ENCODE measurements at regions of chr9 and their contacts with region 1.

Region 1: DNA sequence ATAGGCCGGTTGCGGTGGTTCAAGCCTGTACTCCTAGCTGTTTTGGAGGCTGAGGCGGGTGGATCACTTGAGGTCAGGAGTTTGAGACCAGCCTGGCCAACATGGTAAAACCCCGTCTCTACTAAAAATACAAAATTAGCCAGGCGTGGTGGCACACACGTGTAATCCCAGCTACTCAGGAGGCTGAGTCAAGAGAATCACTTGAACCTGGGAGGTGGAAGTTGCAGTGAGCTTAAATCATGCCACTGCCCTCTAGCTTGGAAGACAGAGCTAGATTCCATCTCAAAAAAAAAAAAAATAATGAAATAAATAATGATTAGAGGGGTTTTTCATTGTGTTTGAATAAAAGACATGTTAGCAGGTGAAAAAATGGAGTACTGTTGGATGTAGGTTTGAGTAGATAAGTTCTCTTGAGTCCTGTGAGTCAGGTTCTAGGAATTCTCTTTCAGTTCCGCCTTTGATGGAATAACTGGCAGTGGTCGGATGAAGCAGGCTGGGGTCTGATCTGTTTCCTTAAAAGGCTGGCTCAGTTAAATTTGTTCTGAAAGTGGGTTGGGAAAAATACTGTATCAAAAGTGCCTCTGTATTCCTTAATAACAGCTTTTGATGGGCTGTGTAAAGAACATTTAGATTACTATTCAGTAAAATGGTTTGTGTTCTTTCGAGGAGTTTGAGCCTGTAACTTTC is 73.2 kb downstream of the AOPEP start:
- DNase-seq: no peak
- H3K4me3 ChIP-seq: no peak overlapping the region
- H3K27ac ChIP-seq: peak overlapping the region; percentile 64 to 66
- H3K4me1 ChIP-seq: no peaks in the 10 kb centered on the region
- H3K27me3 ChIP-seq: no peaks in the 10 kb centered on the region
- CTCF ChIP-seq: no peak
- POLR2A ChIP-seq: no peak

Region 2: GRCh38 chr9:94681508-94681907 is 118.2 kb before region 1 on chr9:
- intact Hi-C with region 1: loop called (anchors 10 kb)
- DNase-seq: peak; percentile 70
- H3K4me3 ChIP-seq: no peak overlapping the region
- H3K27ac ChIP-seq: no peak overlapping the region
- H3K4me1 ChIP-seq: no peaks in the 10 kb centered on the region
- H3K27me3 ChIP-seq: no peaks in the 10 kb centered on the region
- CTCF ChIP-seq: peak in 3 of 4 experiments; percentile 72 to 82 (median 80)
- POLR2A ChIP-seq: no peak

Measured in prostate gland (tissue), 2 donors.